Aorta (tissue), 5 donors: ENCODE measurements at regions of chr4 and their contacts with region 1.

Region 1: GRCh38 chr4:14916554-14917297 is 85.6 kb upstream of the CPEB2 start:
- DNase-seq: no peak
- ATAC-seq: no peak
- H3K4me3 ChIP-seq: no peak overlapping the region
- H3K27ac ChIP-seq: no peak overlapping the region
- H3K4me1 ChIP-seq: no peaks in the 10 kb centered on the region
- H3K27me3 ChIP-seq: no peaks in the 10 kb centered on the region

Region 2: GRCh38 chr4:14837860-14838259 is 78.9 kb before region 1 on chr4:
- intact Hi-C with region 1: loop called (anchors 5 to 10 kb)
- DNase-seq: no peak
- ATAC-seq: no peak
- H3K4me3 ChIP-seq: no peak overlapping the region
- H3K27ac ChIP-seq: no peak overlapping the region
- H3K4me1 ChIP-seq: peaks cover 0 to 4% of the 10 kb centered on the region in 2 donors
- H3K27me3 ChIP-seq: no peaks in the 10 kb centered on the region

Region 3: GRCh38 chr4:14856076-14856933 is 60.4 kb before region 1 on chr4:
- intact Hi-C with region 1: loop called in 1 of 2 experiments (anchors 10 kb)
- DNase-seq: peak; percentile 78 to 84
- ATAC-seq: peak; percentile 80
- H3K4me3 ChIP-seq: no peak overlapping the region
- H3K27ac ChIP-seq: peak overlapping the region in 1 of 2 donors; percentile 56
- H3K4me1 ChIP-seq: peaks cover 2 to 3% of the 10 kb centered on the region in 2 donors
- H3K27me3 ChIP-seq: no peaks in the 10 kb centered on the region

Region 4: DNA sequence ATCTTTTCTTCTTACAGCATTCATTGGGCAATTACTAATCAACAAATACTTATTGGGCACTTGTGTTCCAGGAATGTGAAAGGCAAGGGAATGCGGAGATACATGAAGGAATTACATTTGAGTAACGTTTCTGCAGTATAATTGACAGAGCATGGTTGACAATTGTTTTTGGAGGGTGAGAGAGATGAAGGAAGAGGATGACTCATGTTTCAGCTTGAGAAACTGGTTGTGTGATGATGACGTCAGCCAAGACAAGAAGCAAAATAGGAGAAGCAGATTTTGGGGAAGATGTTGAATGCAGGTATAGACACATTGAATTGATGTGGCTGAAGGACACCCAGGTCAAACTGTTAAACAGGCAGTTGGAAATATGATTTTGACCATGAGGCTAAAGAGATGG is 77.5 kb after region 1 on chr4:
- intact Hi-C with region 1: loop called in 1 of 2 experiments (anchors 10 kb)
- DNase-seq: no peak
- ATAC-seq: no peak
- H3K4me3 ChIP-seq: no peak overlapping the region
- H3K27ac ChIP-seq: no peak overlapping the region
- H3K4me1 ChIP-seq: no peaks in the 10 kb centered on the region
- H3K27me3 ChIP-seq: no peaks in the 10 kb centered on the region